Activated T-helper 1 cell treated with anti-CD3 and anti-CD28 coated beads, Interleukin-12 subunit alpha, Interleukin-12 subunit beta, Interleukin-2, Interleukin-4 antibody, amounts not matched to agents 30 ng/mL and 10 ng/mL and 1 ng/mL, durations not matched to agents 14 hours and 24 hours and 36 hours (primary cell): ENCODE measurements at regions of chr13 and their contacts with region 1.

Region 1: DNA sequence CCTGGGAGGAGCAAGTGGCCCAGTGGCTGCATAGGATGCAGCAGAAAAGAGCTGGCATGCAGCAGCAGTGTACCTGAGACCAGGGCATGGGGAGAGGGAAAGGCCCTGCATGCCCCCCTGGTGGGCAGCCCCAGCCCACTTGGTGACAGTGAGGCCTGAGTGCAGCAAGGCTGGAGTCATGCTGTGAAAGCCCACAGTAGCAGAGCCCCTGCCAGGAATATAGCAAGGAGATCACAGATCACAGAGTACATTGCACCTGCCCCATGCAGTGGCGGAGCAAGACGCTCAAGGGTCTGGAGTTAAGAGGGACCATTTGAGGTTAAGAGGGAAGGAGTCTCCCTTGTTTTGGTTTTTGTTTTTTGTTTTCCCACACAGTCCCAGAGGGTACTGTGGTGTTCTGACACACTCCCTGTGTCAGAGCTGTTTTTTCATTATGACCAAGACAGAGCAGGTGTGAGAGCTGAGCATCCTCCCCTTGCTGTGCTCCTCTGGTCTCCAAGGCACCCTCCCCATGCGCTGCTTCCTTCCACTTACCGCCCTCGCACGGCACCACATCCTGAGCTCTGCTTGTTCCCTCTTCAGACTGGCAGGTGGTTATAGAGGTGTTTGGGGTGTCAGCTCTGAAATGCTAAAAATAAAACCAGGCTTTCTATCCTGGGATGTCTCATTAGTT is 85.0 kb upstream of the UBL3 start:
- DNase-seq: peak; percentile 82
- H3K4me3 Mint-ChIP-seq: peak overlapping the region; percentile 86
- H3K27ac Mint-ChIP-seq: peak overlapping the region; percentile 95
- H3K4me1 Mint-ChIP-seq: peaks cover 69% of the 10 kb centered on the region
- H3K27me3 Mint-ChIP-seq: no peaks in the 10 kb centered on the region

Region 2: DNA sequence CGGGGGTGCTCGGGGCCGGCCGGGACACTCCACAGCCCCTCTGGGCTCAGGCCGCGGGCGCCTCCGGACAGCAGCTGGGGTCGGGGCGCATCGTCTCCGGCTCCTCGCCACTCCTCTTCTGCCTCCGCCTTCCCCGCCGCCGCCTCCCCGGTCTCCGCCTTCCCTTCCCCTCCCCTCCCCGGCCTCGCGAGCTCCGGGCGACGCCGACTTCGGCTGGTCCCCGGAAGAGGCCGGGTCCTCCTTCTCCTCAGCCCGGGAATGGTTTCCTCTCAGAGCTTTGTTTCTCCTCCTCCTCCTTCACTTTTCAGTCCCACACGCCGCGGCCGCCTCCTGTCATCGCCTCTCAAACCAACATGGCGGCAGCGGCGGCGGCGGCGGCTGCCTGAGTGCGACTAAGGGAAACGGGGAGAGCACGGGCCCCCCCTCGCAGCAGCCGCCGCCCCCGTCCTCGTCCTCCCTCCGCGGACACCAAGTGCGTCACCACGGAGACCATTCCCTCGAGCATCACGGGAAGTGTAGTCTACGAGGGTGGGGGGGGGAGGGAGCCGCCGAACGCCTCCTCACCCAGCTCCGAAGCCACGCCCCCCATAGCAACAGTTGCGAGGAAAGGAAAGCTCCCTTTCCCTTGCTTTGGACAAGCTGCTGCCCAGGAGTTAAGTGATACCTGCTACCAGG is 85.1 kb before region 1 on chr13 and contains the start of gene UBL3:
- intact Hi-C with region 1: loop called (anchors 1 kb)
- DNase-seq: peak; percentile 90
- H3K4me3 Mint-ChIP-seq: peak within 1 kb of the TSS; percentile 97
- H3K27ac Mint-ChIP-seq: peak within 1 kb of the TSS; percentile 98
- H3K4me1 Mint-ChIP-seq: peaks cover 50% of the 10 kb centered on the region
- H3K27me3 Mint-ChIP-seq: no peaks in the 10 kb centered on the region
- total RNA-seq, gene UBL3: 10.9 and 12.8 TPM in 2 replicates

Region 3: DNA sequence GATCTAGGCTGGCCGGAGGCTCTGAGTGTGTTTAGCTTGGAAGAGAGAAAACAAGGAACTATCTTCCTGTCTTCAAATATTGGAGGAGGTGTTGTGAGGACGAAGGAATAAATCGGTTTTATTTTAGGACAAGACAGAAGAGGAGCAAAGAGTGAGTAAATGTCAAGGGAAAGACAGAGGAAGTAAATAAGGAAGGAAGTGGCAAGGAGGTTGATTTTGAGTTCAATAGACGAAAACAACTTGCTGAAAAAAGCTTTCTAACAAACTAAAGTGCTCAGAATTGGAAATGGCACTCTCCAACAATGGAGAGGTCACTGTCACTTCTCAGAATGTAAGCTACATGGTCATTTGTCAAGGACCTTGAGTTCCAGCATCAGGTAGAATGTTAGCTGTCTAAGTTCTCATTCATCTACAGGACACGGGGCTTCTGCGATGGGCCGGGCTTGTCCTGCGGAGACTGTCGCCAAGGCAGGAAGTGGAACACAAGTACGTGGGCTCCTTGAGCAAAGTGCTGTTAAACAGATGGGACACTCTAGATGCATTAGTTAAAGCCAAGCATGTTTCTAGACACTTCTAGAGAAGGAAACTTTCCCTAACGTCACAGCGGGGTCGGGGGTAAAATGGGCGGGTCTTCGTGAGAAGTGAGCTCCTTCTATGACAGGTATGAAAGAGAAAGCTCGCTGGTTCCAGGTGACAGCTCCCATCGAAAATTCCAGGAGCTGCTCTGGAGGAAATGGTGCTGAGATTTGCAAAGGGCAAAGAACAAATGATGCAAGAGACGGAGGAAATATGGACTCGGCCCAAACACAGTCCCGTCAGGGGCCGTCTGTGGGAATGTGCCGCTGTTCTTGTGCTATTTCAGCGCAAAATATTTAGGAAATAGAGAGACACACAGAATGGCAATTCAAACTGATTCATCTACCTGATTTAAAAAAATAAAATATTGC is 18.9 kb after region 1 on chr13:
- intact Hi-C with region 1: loop called (anchors 1 kb)
- DNase-seq: peak; percentile 29
- H3K4me3 Mint-ChIP-seq: peak overlapping the region; percentile 71
- H3K27ac Mint-ChIP-seq: peak overlapping the region; percentile 86
- H3K4me1 Mint-ChIP-seq: peaks cover 27% of the 10 kb centered on the region
- H3K27me3 Mint-ChIP-seq: peaks cover 3% of the 10 kb centered on the region

Region 4: DNA sequence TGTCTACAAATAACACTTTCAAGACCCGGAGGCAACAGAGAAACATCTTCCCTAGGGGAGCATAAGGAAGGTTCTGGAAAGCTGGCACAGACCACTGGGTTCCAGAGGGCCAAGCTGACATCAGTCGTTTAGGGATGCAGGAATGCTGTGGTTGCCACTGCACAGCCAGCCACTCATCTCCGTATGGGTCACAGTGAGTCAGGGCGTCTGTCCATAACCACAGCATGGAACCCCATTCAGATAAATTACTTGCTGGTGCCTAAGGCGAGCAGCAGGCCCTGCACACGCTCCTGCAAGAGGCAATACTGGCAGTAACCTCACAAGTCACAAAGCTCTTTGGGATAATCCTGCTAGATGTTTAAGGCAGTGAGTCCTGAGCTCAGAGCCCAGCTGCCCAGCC is 55.9 kb after region 1 on chr13:
- intact Hi-C with region 1: no loop called
- DNase-seq: no peak
- H3K4me3 Mint-ChIP-seq: no peak overlapping the region
- H3K27ac Mint-ChIP-seq: no peak overlapping the region
- H3K4me1 Mint-ChIP-seq: no peaks in the 10 kb centered on the region
- H3K27me3 Mint-ChIP-seq: no peaks in the 10 kb centered on the region

Region 5: DNA sequence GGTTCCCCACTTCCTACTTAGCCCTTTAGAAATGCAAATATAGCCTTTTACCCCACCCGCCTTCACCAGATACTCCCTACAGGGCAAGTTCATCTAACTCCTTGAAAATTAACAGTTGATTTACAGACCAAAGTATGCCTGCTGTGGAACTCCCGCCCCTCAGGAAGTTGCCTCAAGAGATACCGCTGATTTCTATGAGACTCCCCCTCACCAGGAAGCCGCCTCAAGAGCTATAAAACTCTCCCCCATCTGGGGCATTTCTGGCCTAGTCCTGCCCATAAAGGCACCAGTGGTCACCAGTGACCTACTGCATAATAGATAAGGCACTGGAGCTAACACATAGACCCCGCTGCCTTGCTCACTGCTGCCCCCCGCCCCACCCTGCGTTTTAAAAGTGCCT is 116.7 kb after region 1 on chr13:
- intact Hi-C with region 1: loop called (anchors 1 kb)
- DNase-seq: no peak
- H3K4me3 Mint-ChIP-seq: no peak overlapping the region
- H3K27ac Mint-ChIP-seq: no peak overlapping the region
- H3K4me1 Mint-ChIP-seq: peaks cover 24% of the 10 kb centered on the region
- H3K27me3 Mint-ChIP-seq: peaks cover 12% of the 10 kb centered on the region

Region 6: GRCh38 chr13:30159446-30159839 is 224.0 kb after region 1 on chr13:
- intact Hi-C with region 1: no loop called
- DNase-seq: peak; percentile 42
- H3K4me3 Mint-ChIP-seq: peak overlapping the region; percentile 23
- H3K27ac Mint-ChIP-seq: peak overlapping the region; percentile 78
- H3K4me1 Mint-ChIP-seq: peaks cover 43% of the 10 kb centered on the region
- H3K27me3 Mint-ChIP-seq: peaks cover 4% of the 10 kb centered on the region

Region 7: DNA sequence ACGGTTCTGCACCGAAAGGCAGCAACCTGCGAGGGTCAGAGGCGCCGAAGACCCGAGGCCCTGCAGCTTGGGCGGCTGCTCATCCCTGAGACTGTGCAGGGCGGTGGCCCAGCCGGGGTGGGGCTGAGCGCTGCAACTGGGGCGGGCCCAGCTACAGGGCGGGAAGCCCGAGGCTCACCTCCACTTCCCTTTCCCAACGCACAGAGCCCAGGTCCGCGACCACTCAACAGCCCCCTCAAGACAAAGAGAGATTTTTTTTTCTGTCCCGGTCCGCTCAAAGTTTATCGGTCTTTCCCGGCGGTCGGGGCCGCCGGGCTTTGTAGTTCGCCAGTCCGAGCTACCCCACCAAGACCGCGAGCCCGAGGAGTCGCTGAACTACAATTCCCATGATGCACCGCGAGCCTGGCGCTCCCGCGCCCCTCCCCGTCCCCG is 371.3 kb after region 1 on chr13:
- intact Hi-C with region 1: loop called (anchors 10 kb)
- DNase-seq: peak; percentile 90
- H3K4me3 Mint-ChIP-seq: peak overlapping the region; percentile 88
- H3K27ac Mint-ChIP-seq: peak overlapping the region; percentile 84
- H3K4me1 Mint-ChIP-seq: peaks cover 65% of the 10 kb centered on the region
- H3K27me3 Mint-ChIP-seq: no peaks in the 10 kb centered on the region

Region 8: GRCh38 chr13:30617315-30618185 is 682.1 kb after region 1 on chr13 and contains the start of gene USPL1:
- intact Hi-C with region 1: loop called (anchors 2 kb)
- DNase-seq: peak; percentile 99
- H3K4me3 Mint-ChIP-seq: no peak within 1 kb of the TSS
- H3K27ac Mint-ChIP-seq: no peak within 1 kb of the TSS
- H3K4me1 Mint-ChIP-seq: peaks cover 12% of the 10 kb centered on the region
- H3K27me3 Mint-ChIP-seq: no peaks in the 10 kb centered on the region
- total RNA-seq, gene USPL1: 17.2 and 17.5 TPM in 2 replicates